ENCODE measurements at regions of chr7 and their contacts with region 1.

Region 1: DNA sequence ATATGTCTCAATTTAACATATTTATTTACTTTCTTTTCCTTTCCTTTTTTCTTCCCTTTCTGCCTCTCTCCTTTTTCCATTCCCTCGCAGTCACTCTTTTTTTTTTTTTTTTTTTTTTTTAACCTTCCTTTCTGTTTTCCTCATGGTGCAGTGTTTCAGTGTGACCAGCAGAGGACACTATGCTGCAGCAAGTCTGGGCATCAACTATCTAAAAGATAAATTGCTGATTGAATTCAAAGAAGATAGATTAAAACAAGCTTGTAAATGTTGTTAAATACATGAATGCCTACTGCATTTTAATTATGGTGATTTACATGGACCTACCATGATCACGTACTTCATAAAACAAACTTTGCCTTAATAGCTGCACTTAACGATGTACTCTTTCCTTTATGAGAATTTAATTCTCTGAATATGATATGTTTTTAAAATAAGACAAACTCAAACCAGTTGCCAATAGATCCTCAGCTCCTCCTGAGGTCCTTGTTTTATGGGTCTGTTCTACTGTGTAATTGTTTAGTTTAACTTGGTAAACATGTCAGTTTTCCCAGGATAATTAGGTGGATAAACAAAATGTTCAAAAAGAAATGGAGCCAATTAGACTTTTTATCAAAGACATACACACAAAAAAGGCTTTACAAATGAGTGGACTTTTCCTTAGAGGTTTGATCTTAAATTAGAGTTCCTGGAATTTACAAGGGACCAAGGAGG is 101.0 kb upstream of the AGR3 start:
- DNase-seq: peak in 3 of 5 donors; percentile 27 to 49 (median 29)
- H3K4me3 ChIP-seq: no peak overlapping the region
- H3K4me3 Mint-ChIP-seq: peak overlapping the region in 1 of 7 donors; percentile 9
- H3K27ac ChIP-seq: no peak overlapping the region
- H3K27ac Mint-ChIP-seq: no peak overlapping the region
- H3K4me1 ChIP-seq: no peaks in the 10 kb centered on the region
- H3K4me1 Mint-ChIP-seq: peaks cover 2 to 5% (median 4%) of the 10 kb centered on the region in 3 donors
- H3K27me3 ChIP-seq: no peaks in the 10 kb centered on the region
- H3K27me3 Mint-ChIP-seq: peaks cover 3 to 14% of the 10 kb centered on the region in 2 donors

Region 2: DNA sequence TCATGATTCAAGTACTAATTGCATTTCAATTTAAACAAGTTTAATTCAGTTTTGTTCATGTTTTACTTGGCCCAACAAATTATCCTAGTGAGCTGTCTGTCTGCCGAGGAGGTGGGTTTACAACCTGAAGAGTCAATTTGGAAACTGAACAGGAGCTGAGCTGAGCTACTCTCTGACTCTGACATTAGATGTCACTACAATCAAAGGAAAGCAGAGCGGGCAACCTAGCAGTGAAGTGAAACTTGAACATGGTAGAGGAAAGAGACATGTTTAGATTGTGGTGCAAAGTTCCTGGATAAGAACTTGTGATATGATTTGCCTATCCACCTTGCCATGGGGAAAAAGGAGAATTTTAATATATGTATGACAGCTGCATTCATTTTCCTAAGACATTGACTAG is 91.5 kb before region 1 on chr7:
- CTCF ChIA-PET with region 1: no interaction called
- POLR2A ChIA-PET with region 1: no interaction called
- DNase-seq: peak in 2 of 5 donors; percentile 14 to 16
- H3K4me3 ChIP-seq: no peak overlapping the region
- H3K4me3 Mint-ChIP-seq: no peak overlapping the region
- H3K27ac ChIP-seq: no peak overlapping the region
- H3K27ac Mint-ChIP-seq: no peak overlapping the region
- H3K4me1 ChIP-seq: no peaks in the 10 kb centered on the region
- H3K4me1 Mint-ChIP-seq: peaks cover 8 to 26% (median 21%) of the 10 kb centered on the region in 3 donors
- H3K27me3 ChIP-seq: no peaks in the 10 kb centered on the region
- H3K27me3 Mint-ChIP-seq: no peaks in the 10 kb centered on the region

Region 3: DNA sequence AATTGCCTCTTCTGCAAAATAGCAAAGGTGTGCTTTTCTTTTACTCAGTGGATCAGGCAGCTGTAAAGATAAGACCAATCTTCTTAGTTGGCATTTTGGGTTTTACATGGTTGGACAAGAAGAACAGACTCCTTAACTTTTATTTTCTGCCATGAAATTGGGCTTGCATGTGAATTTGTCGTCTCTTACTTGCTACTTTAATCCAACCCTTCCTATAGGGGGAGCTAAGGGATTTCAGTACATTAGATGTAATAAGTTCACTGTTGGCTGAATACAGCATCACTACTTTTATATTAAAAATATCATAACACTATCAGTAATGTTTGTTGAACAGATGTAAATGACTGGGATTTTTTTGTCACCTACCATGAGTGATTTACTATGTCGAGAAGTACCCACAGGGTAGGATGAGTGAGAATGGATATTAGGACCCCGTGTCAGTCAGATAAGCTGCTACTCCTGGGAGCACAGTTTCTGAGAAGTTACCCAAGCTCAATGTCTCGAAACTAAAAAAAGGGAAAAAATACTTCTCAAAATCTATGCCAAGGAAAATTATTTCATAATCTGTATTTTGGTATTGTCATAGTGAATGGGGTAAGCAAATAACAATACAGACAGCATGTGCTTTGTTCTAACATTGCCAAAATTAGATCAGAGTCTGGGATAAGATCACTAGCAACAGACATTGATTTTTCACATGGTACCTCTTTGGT is 26.4 kb after region 1 on chr7:
- CTCF ChIA-PET with region 1: interaction called, 12 read pairs
- POLR2A ChIA-PET with region 1: interaction called, 9 read pairs
- DNase-seq: no peak
- H3K4me3 ChIP-seq: no peak overlapping the region
- H3K4me3 Mint-ChIP-seq: no peak overlapping the region
- H3K27ac ChIP-seq: no peak overlapping the region
- H3K27ac Mint-ChIP-seq: peak overlapping the region in 1 of 8 donors; percentile 14
- H3K4me1 ChIP-seq: no peaks in the 10 kb centered on the region
- H3K4me1 Mint-ChIP-seq: peaks cover 9 to 21% (median 19%) of the 10 kb centered on the region in 3 donors
- H3K27me3 ChIP-seq: no peaks in the 10 kb centered on the region
- H3K27me3 Mint-ChIP-seq: peaks cover 3 to 5% of the 10 kb centered on the region in 2 donors